Calu3 (cell line): ENCODE measurements at regions of chr12 and their contacts with region 1.

Region 1: DNA sequence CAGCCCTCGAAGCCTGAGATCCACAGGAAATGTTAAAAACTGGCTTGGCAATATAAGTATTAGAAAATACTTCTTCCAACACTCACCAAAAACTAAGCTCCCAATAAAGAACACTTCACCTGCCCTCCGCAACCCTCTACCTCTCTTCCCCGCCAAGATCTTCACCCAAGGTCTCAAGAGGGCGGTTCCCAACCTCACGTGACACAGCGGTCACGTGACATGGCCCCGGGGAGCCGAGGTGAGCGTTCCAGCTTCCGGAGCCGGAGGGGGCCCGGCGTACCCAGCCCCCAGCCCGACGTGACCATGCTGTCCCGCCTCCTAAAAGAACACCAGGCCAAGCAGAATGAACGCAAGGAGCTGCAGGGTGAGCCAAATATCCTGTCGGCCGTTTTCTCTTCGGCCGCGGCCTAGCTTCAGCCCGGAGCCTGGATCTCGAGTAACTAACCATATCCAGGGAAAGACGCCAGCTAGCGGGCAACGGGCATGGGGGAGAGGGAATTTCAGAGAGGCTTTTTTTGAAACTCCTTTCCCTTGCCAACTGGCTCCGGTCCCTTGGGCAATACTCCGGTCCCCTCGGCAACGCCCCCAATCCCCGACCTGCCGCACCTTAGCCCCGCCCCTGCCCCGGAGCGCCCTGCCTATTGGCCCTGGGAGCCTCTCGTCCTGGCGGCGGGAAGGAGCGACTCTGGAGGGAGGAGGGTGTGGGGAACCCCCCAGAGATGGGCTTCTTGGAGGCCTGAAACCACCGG is at the start of gene BLOC1S1:
- DNase-seq: peak; percentile 98
- H3K4me3 Mint-ChIP-seq: peak within 1 kb of the TSS; percentile 86
- H3K27ac Mint-ChIP-seq: peak within 1 kb of the TSS; percentile 97
- H3K4me1 Mint-ChIP-seq: peaks cover 47% of the 10 kb centered on the region
- H3K27me3 Mint-ChIP-seq: peaks cover 27% of the 10 kb centered on the region
- CTCF ChIP-seq: no peak
- total RNA-seq, gene BLOC1S1: 71.0 and 89.4 TPM in 2 replicates

Region 2: DNA sequence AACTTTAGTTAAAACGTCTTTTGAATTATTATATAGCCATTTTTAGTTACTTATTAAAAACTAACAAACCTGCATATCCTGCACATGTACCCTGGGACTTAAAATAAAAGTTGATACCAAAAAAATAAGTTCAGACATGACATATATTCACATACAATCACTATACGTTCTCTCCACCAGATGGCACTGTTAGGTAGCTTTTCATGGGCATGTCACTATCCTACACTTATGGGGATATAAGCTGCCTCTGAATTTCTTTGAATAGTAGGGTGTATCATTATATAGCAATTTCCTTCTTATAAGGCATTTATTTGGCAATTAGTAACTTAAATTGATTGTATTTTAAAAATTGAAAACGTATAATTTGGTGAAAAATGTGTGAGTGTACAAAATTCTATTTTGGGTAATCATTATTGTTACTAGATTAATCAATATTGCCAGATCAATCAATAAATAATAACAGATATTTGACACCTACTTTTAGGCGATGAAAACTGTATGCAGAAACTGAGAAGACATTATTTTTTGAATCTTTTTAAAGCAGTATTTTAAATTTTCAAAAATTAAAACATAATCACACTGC is 526.9 kb before region 1 on chr12:
- CTCF ChIA-PET with region 1: interaction called, 4 read pairs
- intact Hi-C with region 1: loop called (anchors 2 kb)
- DNase-seq: peak; percentile 71
- H3K4me3 Mint-ChIP-seq: no peak overlapping the region
- H3K27ac Mint-ChIP-seq: no peak overlapping the region
- H3K4me1 Mint-ChIP-seq: no peaks in the 10 kb centered on the region
- H3K27me3 Mint-ChIP-seq: peaks cover 8% of the 10 kb centered on the region
- CTCF ChIP-seq: peak; percentile 56

Region 3: DNA sequence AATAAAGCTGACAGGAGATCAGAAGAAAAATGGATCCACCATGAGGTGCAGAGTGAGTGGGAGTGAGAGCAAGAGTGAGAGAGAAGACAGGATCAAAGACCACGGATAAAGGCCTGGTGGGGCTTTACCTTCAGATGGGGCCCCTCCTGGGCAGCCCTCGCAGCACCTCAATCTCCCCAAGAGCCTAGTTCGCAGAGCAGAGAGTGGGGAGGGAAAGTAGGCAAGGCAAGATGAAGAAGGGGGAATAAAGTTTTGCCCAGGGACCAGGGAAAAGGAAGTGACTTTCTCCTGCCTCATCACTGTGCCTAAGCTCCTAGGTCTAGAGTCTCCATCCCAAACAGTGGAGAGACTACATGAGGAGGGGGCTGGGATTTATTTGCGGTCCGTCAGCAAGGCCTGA is 69.0 kb before region 1 on chr12:
- CTCF ChIA-PET with region 1: interaction called, 12 read pairs
- intact Hi-C with region 1: no loop called
- DNase-seq: no peak
- H3K4me3 Mint-ChIP-seq: no peak overlapping the region
- H3K27ac Mint-ChIP-seq: peak overlapping the region; percentile 14
- H3K4me1 Mint-ChIP-seq: peaks cover 17% of the 10 kb centered on the region
- H3K27me3 Mint-ChIP-seq: peaks cover 23% of the 10 kb centered on the region
- CTCF ChIP-seq: no peak

Region 4: GRCh38 chr12:55659486-55660385 is 56.3 kb before region 1 on chr12:
- CTCF ChIA-PET with region 1: interaction called, 8 read pairs
- intact Hi-C with region 1: loop called (anchors 1 kb)
- DNase-seq: peak; percentile 58
- H3K4me3 Mint-ChIP-seq: no peak overlapping the region
- H3K27ac Mint-ChIP-seq: no peak overlapping the region
- H3K4me1 Mint-ChIP-seq: peaks cover 29% of the 10 kb centered on the region
- H3K27me3 Mint-ChIP-seq: peaks cover 4% of the 10 kb centered on the region
- CTCF ChIP-seq: peak; percentile 53

Region 5: DNA sequence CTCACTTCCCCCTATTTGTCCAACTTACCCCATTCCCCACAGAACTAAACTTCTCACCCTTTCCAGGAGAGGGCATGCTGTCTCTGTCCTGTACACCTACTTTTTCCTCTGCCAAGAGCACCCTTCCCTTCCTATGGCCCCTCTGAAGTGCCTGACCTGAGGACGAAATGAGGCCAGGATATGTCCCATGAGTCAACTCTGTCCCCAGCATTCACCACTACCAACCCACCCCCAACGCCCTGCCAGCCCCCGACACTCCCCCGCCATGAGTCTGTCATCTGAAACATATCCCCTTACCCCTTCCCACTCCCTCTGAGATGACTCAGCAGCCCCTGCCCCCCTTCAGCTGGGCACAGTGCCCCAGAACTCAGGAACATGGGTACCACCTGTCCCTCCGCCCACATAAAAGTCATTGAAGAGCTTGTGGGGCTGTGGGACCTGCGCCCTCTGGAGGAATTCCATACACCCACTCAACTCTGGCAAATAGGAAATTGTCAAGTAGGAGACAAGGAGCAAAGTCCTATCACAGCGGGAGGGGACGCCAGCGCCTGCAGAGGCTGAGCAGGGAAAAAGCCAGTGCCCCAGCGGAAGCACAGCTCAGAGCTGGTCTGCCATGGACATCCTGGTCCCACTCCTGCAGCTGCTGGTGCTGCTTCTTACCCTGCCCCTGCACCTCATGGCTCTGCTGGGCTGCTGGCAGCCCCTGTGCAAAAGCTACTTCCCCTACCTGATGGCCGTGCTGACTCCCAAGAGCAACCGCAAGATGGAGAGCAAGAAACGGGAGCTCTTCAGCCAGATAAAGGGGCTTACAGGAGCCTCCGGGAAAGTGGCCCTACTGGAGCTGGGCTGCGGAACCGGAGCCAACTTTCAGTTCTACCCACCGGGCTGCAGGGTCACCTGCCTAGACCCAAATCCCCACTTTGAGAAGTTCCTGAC is 34.6 kb before region 1 on chr12:
- CTCF ChIA-PET with region 1: interaction called, 76 read pairs
- intact Hi-C with region 1: loop called (anchors 1 kb)
- DNase-seq: peak; percentile 87
- H3K4me3 Mint-ChIP-seq: peak overlapping the region; percentile 87
- H3K27ac Mint-ChIP-seq: peak overlapping the region; percentile 68
- H3K4me1 Mint-ChIP-seq: peaks cover 30% of the 10 kb centered on the region
- H3K27me3 Mint-ChIP-seq: no peaks in the 10 kb centered on the region
- CTCF ChIP-seq: peak; percentile 55

Region 6: GRCh38 chr12:55728939-55729823 is 13.2 kb after region 1 on chr12 and contains the start of gene CD63:
- CTCF ChIA-PET with region 1: interaction called, 22 read pairs
- intact Hi-C with region 1: no loop called
- DNase-seq: peak; percentile 93
- H3K4me3 Mint-ChIP-seq: peak within 1 kb of the TSS; percentile 80
- H3K27ac Mint-ChIP-seq: peak within 1 kb of the TSS; percentile 93
- H3K4me1 Mint-ChIP-seq: peaks cover 35% of the 10 kb centered on the region
- H3K27me3 Mint-ChIP-seq: no peaks in the 10 kb centered on the region
- CTCF ChIP-seq: no peak
- total RNA-seq, gene CD63: 880 and 991 TPM in 2 replicates